Naive thymus-derived CD8-positive, alpha-beta T cell (primary cell): ENCODE measurements at regions of chr9 and their contacts with region 1.

Region 1: DNA sequence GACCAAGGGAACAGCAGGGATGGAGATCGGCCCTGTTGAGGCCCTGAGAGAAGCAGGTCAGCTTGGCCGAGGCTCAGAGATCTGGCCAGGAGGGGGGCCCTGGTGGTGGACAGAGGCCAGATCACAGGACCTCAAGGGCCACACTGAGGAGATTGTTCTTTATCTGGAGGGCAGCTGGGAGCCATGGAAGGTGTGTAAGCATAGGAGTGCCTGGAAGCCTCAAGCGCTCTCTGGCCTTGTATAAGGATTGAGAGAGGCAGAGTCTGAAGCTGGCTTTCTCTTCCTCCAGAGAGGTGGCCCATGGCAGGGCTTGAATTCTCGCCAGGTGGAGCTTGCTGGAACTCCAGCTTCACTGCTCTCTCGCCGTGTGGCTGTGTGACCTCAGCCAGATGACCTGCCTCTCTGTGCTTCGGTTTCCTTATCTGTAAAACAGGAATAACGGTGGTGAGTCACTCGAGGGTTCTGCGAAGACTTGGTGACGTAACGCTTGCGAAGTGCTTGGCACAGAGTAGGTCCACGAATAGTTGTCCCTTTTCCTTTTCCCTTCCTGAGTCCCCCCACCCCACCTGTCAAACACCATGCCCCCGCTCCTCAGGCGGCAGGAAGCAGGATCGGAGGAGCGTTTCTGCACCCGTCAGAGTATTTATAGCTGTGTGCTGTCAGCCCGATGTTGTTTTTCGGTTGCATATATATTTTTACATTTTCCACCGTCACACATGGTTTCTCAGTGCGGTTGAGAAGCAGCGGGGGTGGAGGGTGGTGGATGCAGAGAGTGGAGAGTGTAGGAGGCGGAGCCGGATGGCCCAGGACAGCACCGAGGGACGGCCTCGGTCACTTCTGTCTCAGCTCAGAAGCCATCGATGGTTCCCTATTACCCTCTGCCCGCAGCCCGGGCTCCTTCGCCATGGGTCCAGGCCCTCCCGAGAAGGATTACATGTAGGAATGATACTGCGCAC is 17.0 kb upstream of the CRB2 start:
- DNase-seq: peak in 8 of 10 donors; percentile 7 to 45 (median 34)
- ATAC-seq: peak; percentile 69
- H3K4me3 Mint-ChIP-seq: peak overlapping the region; percentile 80 to 93 (median 90)
- H3K27ac Mint-ChIP-seq: peak overlapping the region; percentile 80 to 96 (median 92)
- H3K4me1 Mint-ChIP-seq: peaks cover 31 to 86% (median 40%) of the 10 kb centered on the region in 4 donors
- H3K27me3 Mint-ChIP-seq: no peaks in the 10 kb centered on the region

Region 2: DNA sequence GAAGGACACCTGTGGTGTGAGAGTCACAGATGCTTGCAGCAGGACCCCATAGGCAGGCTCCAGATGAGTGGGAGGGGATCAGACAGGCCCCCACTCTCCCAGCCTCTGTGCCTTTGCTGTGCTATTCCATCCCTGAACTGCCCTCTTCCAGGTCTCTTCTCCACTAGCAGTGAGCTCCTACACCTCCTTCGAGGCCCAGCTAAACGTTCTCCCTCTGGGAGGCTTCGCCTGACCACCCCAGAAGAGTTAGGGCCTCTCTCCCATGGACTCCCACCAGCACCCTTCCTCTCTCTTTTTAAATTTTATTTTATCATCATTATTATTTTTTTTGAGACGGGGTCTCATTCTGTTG is 34.7 kb before region 1 on chr9:
- POLR2A ChIA-PET with region 1: interaction called, 16 read pairs
- DNase-seq: no peak
- ATAC-seq: no peak
- H3K4me3 Mint-ChIP-seq: peak overlapping the region; percentile 64 to 93 (median 83)
- H3K27ac Mint-ChIP-seq: peak overlapping the region in 9 of 10 donors; percentile 81 to 96 (median 89)
- H3K4me1 Mint-ChIP-seq: peaks cover 19 to 53% (median 46%) of the 10 kb centered on the region in 4 donors
- H3K27me3 Mint-ChIP-seq: no peaks in the 10 kb centered on the region

Region 3: DNA sequence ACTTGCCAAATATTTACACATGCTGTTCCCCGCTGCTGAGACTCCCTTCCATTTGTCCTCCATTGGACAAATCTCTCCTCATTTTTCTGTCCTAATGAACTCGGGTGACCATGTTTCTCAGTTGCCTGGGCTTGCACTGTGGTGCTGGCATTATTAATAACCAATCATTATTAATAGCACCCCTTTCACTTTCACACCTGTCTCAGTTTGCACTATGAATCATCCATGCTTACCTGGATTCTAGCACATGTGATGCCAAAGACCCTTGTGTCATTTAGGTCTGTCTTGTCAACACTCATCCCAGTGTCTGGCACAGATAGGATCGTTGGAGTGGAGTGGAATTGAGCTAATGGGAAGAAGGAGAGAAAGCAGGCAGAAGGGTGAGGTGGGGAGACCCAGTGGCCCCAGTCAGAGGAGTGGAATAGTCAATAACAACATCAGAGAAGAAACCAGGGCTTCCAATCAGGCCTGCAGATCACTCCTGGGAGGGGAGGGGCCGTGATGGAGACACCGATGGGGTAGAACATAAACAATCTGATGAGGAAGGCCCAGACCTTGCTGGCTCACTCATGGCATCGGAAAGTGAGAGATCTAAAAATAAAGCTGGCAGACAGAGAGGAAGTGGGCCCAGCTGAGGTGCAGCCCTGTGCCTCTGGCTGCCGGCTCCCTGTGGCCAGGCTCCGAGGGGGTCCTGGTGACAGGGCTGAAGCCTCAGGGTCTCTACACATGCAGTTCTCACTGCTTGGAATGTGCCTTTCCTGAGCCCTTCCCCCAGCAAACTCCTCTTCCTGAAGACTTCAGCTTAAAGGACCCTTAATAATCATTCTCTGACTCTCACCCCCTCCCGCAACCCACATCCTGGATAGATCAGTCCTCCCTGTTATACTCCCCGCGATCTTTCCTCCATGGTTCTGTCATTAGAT is 16.5 kb before region 1 on chr9:
- POLR2A ChIA-PET with region 1: interaction called, 25 read pairs
- DNase-seq: peak; percentile 26 to 82 (median 67)
- ATAC-seq: peak; percentile 88 to 93
- H3K4me3 Mint-ChIP-seq: peak overlapping the region; percentile 62 to 86 (median 72)
- H3K27ac Mint-ChIP-seq: peak overlapping the region; percentile 82 to 98 (median 92)
- H3K4me1 Mint-ChIP-seq: peaks cover 34 to 73% (median 52%) of the 10 kb centered on the region in 4 donors
- H3K27me3 Mint-ChIP-seq: no peaks in the 10 kb centered on the region